Posterior vena cava (tissue), 2 donors: ENCODE measurements at regions of chr3 and their contacts with region 1.

Region 1: GRCh38 chr3:139794469-139795265 is 116.9 kb upstream of the NMNAT3 start:
- DNase-seq: no peak

Region 2: GRCh38 chr3:139811331-139811730 is 16.7 kb after region 1 on chr3:
- intact Hi-C with region 1: loop called in 1 of 2 experiments (anchors 1 kb)
- DNase-seq: no peak

Region 3: DNA sequence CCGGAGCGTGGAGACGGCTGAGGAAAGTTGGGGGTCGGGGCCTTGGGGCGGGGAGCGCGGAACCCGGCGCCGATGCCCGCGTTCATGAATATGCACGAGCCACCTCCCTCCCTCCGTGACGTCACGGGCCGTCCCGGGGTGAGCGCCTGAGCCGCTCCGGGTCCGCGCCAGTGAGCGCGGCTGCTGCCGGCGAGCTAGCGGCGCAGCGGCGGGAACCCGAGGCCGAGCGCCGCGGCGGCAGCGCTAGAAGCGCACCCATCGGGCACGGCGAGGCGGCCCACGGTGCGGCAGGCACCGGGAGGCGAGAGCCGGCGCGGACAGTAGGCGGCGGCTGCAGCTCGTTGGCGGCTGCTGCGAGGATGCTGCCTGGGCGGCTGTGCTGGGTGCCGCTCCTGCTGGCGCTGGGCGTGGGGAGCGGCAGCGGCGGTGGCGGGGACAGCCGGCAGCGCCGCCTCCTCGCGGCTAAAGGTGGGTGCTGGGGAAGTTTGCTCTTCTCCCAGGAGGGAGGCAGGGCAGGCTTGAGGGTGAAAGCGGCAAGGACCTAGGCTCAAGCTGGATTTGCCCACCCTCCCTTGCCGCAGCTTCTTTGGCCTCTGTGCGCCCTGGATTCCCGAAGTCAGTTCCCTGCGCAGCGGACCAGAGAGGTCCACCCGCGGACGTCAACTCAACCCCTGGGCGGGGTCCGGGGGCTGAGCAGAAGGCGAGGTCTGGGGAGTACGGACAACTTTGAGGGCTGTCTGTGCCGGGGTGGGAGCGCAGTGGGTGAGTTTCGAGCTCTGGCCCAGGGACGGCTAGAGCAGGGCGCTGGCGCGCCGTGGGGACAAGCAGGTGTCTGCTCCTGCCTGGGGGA is 140.6 kb after region 1 on chr3 and contains the start of gene CLSTN2:
- intact Hi-C with region 1: no loop called
- DNase-seq: peak; percentile 91
- total RNA-seq, gene CLSTN2: 22.2 to 28.0 TPM